ENCODE measurements at regions of chr17 and their contacts with region 1.

Region 1: DNA sequence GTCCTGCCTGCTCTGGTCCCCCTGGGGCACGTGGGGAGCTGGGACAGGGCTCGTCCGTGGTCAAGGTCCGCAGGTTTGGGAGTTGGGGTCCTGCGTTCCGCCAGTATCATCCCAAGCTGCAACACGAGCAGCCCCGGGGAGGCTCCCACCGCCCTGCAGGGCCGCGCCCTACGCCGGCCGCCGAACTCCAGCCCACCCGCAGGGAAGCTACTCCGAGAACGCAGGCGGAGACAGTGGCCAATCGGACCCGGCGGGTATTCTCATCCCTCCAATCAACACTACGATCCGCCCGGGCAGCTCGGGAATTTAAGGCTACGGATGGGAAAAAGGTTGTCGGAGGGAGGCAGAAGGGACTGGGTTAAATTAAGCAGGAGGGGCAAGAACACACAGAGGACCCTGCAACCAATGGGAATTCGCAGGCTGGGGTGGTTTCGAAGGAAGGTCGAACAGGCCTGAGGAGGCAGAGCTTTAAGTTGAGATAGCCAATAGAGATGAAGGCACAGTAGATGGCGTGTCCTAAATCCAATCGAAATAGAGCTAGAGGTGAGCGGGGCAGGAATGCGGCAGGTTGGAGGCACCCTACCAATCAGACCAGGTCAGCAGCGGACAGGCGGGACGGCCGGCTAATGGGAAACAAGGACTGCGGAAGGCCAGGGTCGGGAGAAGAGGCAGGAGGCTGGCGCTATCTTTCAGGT is 626 bp downstream of the SPAG7 start:
- DNase-seq: peak; percentile 95 to 100 (median 99)
- H3K4me3 ChIP-seq: peak overlapping the region; percentile 62 to 99 (median 85)
- H3K27ac ChIP-seq: peak overlapping the region; percentile 90 to 100 (median 99)
- H3K27me3 ChIP-seq: no peaks in the 10 kb centered on the region
- CTCF ChIP-seq: peak in 8 of 56 donors; percentile 2 to 34 (median 10)

Region 2: GRCh38 chr17:4100883-4101756 is 865.9 kb before region 1 on chr17:
- intact Hi-C with region 1: no loop called
- DNase-seq: peak in 1 of 10 donors; percentile 16
- H3K4me3 ChIP-seq: peak overlapping the region in 2 of 59 donors; percentile 1 to 2
- H3K27ac ChIP-seq: peak overlapping the region; percentile 41 to 91 (median 82)
- H3K27me3 ChIP-seq: no peaks in the 10 kb centered on the region
- CTCF ChIP-seq: no peak

Region 3: DNA sequence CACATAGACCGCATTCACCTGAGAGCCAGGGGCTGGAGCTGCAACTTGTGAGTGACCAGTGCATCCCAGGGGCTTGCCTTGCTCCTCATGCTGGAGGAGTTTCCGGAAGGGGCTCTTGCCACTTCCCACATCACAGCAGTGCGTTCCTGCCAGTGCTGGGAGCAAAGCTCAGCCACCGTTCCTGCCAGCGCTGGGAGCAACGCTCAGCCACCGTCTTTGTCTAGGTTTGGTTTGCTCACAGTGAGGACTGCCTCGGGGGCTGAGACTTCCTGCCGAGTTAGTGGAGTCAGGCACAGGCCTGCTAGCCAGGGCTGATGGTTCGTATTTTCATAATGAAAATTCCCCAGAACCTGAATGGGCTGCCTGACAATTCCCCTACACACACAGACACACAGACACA is 58.7 kb before region 1 on chr17:
- intact Hi-C with region 1: loop called (anchors 2 to 5 kb)
- DNase-seq: no peak
- H3K4me3 ChIP-seq: no peak overlapping the region
- H3K27ac ChIP-seq: peak overlapping the region in 1 of 59 donors; percentile 17
- H3K27me3 ChIP-seq: no peaks in the 10 kb centered on the region
- CTCF ChIP-seq: no peak

Region 4: DNA sequence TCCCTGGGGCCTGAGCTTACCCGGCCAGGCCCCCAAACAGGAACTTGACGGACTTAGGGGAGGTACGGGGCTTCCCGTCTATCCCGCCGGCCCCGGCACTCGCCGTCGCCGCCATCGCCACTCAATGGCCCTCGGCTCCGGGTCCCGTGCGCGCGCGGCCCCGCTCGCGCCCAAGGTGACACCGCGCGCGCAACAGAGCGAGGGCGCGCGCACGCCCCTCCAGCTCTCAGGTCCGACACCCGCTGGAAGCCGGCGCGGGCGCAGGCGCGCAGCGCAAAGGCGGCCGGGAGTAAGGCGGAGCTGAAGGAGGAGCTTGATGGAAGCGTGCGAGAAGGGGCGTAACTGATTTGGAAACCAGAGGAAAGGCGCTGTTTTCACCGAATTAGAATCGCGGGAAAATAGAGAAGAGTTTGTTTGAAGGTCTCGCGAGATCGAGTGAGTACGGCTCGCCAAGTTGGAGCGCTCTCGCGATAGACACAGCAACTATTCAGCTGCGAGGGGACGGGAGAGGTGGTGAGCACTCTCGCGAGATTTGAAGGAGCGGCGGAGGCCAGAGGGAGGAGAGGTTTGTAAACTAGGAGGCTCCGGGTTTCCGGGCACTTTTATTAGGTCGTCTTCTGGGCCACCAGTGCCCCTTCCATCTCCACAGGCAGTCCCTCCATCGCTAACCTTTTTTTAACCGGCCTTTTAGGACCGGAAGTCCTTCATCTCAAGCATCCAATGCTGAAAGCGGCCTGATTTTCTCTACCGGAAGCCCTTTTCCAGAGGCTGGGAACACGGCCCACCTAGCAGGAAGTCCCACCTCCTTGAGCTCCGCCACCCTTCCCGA is 27.0 kb before region 1 on chr17 and contains the starts of genes RNF167 and SLC25A11:
- intact Hi-C with region 1: loop called (anchors 1 to 2 kb)
- DNase-seq: peak; percentile 84 to 97 (median 94)
- H3K4me3 ChIP-seq: peak within 1 kb of the TSS; percentile 58 to 100 (median 93)
- H3K27ac ChIP-seq: peak within 1 kb of the TSS; percentile 87 to 100 (median 98)
- H3K27me3 ChIP-seq: no peaks in the 10 kb centered on the region
- CTCF ChIP-seq: peak in 31 of 56 donors; percentile 1 to 56 (median 25)
- total RNA-seq, gene RNF167: 65.3 to 121 (median 91.1) TPM
- total RNA-seq, gene SLC25A11: 56.8 to 113 (median 82.2) TPM

Region 5: DNA sequence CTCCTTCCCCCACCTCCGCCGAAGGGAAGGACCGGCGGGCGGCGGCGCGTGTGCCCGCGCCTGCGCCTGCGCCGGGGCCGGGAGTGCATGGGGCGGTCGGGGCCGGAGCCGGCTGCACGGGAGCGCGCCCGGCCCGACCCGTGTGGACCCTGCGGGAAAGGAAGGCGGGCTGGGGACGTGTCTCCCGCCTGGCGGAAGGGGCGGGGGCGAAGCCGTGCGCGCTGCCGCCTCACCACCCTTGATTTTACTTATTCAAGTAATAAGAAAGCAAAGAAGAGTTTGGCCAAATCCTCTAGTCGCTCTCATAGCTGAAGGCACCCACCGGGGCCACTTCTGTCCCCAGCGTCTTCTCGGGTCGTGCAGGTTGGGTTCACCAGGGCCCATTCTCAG is 18.1 kb before region 1 on chr17:
- intact Hi-C with region 1: loop called (anchors 1 kb)
- DNase-seq: peak; percentile 51 to 87 (median 64)
- H3K4me3 ChIP-seq: peak overlapping the region; percentile 68 to 98 (median 91)
- H3K27ac ChIP-seq: peak overlapping the region; percentile 76 to 98 (median 96)
- H3K27me3 ChIP-seq: peaks cover 0 to 3% (median 0%) of the 10 kb centered on the region in 45 donors
- CTCF ChIP-seq: peak in 1 of 56 donors; percentile 4

Region 6: GRCh38 chr17:4997302-4998026 is 30.5 kb after region 1 on chr17 and contains the starts of genes INCA1 and KIF1C:
- intact Hi-C with region 1: loop called in 1 of 2 experiments (anchors 1 kb)
- DNase-seq: peak; percentile 85 to 97 (median 92)
- H3K4me3 ChIP-seq: peak within 1 kb of the TSS; percentile 65 to 99 (median 93)
- H3K27ac ChIP-seq: peak within 1 kb of the TSS; percentile 81 to 99 (median 95)
- H3K27me3 ChIP-seq: no peaks in the 10 kb centered on the region
- CTCF ChIP-seq: peak in 48 of 56 donors; percentile 8 to 68 (median 41)
- total RNA-seq, gene INCA1: 0.36 to 3.7 (median 2.0) TPM in 118 of 120 experiments, not detected in the others
- total RNA-seq, gene KIF1C: 62.4 to 504 (median 132) TPM

Measured in dorsolateral prefrontal cortex (tissue), 120 donors.